ENCODE measurements at regions of chr18 and their contacts with region 1.

Region 1: GRCh38 chr18:10776493-10776892 is 250.7 kb downstream of the NAPG start:
- DNase-seq: no peak
- H3K4me3 ChIP-seq: no peak overlapping the region
- H3K27me3 ChIP-seq: no peaks in the 10 kb centered on the region
- CTCF ChIP-seq: no peak

Region 2: DNA sequence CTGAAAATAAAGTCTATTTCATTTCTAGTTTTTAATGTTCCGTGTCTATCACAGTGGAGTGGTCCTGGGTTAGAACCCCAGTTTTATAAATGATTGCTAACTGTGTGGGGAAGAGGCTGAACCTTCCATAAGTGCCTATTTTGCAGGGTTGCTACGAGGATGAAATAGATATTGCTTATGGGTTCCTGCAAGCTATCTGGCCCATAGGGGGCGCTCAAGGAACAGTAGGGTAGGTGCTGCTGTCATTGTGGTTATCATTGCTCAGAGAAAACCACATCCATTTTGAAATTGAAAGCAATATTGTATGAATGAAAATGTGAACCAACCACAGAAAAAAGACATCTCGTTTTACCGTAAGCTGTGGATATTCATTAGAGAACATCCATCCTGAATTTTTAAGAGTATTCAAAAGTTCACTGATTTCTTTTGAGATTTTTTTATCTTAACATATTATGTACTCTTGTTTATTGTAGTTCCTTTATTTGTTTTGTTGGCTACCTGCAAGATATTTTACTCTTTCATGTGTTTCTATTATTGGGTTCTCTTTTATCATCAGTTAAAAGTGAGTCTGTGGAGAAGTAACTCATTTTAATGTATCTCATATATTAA is 10.9 kb after region 1 on chr18:
- CTCF ChIA-PET with region 1: interaction called, 12 read pairs
- POLR2A ChIA-PET with region 1: no interaction called
- DNase-seq: no peak
- H3K4me3 ChIP-seq: no peak overlapping the region
- H3K27me3 ChIP-seq: peaks cover 1% of the 10 kb centered on the region; the same call in 1 of the 2 replicates
- CTCF ChIP-seq: peak; percentile 90